Endothelial cell of umbilical vein (primary cell): ENCODE measurements at regions of chr9 and their contacts with region 1.

Region 1: GRCh38 chr9:132114102-132114707 is 34.5 kb upstream of the MED27 start:
- DNase-seq: peak; percentile 52
- H3K4me3 ChIP-seq: no peak overlapping the region
- H3K27ac ChIP-seq: no peak overlapping the region
- H3K4me1 ChIP-seq: no peaks in the 10 kb centered on the region
- H3K27me3 ChIP-seq: peaks cover 0 to 2% of the 10 kb centered on the region in 2 experiments
- CTCF ChIP-seq: no peak
- POLR2A ChIP-seq: no peak

Region 2: DNA sequence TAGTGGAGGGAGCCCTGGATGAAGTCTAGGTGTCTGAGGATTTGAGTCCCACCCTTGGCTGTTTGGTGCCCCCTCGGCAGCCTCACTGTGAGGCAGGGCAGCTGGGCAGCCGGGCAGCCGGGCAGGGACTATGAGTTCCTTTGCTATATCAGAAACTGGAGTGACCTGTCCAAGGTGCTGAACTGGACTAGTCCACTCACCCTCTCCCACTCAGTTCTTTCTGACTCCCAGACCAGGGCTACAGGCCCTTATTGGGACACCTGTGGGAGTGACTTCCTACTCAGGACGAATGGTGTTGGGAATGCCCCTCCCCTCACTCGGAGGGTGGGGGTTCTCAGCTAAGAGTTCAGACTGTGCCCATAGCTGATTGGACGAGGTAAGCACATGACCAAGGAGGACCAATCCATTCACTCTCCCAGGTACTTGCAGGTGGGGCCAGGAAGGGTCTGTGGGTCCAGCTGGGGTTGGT is 340.3 kb before region 1 on chr9:
- CTCF ChIA-PET with region 1: no interaction called
- POLR2A ChIA-PET with region 1: no interaction called
- dilution Hi-C with region 1: no loop called
- intact Hi-C with region 1: loop called (anchors 10 kb)
- DNase-seq: peak; percentile 42
- H3K4me3 ChIP-seq: no peak overlapping the region
- H3K27ac ChIP-seq: no peak overlapping the region
- H3K4me1 ChIP-seq: no peaks in the 10 kb centered on the region
- H3K27me3 ChIP-seq: no peaks in the 10 kb centered on the region
- CTCF ChIP-seq: no peak
- POLR2A ChIP-seq: no peak

Region 3: DNA sequence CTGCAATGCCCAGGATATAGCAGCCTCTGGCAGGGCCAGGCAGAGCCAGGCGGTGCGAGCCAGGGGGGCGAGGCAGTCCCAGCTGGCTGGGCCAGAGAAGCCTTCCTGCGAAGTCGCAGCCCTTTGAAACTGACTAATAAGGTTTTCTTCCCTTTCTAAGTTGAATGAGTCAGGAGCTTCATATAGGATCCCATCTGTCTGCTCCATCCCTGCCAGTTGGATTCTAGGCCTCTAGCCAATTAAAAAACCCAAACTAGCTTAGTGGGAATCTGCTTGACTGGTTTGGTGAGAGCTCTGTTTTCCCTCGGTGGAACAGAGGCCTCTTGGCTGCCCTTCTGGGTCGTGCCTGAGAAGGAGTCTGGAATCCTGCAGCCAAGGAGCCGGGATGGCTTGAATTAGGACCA is 304.3 kb before region 1 on chr9:
- CTCF ChIA-PET with region 1: no interaction called
- POLR2A ChIA-PET with region 1: no interaction called
- dilution Hi-C with region 1: loop called (anchors 25 kb)
- intact Hi-C with region 1: no loop called
- DNase-seq: no peak
- H3K4me3 ChIP-seq: no peak overlapping the region
- H3K27ac ChIP-seq: no peak overlapping the region
- H3K4me1 ChIP-seq: no peaks in the 10 kb centered on the region
- H3K27me3 ChIP-seq: peaks cover 0 to 2% of the 10 kb centered on the region in 2 experiments
- CTCF ChIP-seq: no peak
- POLR2A ChIP-seq: no peak